ENCODE measurements at regions of chr10 and their contacts with region 1.

Region 1: DNA sequence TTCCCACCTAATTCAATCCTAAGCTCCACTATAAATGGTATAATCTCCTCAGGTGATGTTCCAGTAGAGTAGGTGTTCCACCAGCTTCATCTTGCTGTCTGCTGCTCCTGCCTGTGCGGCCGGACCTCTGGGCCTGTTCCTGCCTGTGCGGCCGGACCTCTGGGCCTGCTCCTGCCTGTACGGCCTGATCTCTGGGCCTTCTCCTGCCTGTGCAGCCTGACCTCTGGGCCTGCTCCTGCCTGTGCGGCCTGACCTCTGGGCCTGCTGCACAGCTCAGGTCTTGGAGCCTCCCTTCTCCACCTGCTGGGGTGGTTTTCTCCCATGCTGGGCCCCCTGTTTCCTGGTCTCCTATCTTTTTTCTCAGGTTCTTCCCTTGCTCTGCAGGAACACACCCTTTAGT is 117.8 kb downstream of the USP6NL start:
- DNase-seq: no peak
- H3K4me3 ChIP-seq: no peak overlapping the region
- H3K27ac ChIP-seq: no peak overlapping the region
- H3K4me1 ChIP-seq: peaks cover 0 to 3% (median 0%) of the 10 kb centered on the region in 4 experiments; a peak in 1 of 7 replicates
- H3K27me3 ChIP-seq: no peaks in the 10 kb centered on the region
- CTCF ChIP-seq: no peak
- EP300 ChIP-seq: no peak
- POLR2A ChIP-seq: no peak
- RAD21 ChIP-seq: no peak

Region 2: GRCh38 chr10:11505639-11506038 is 12.0 kb after region 1 on chr10:
- CTCF ChIA-PET with region 1: interaction called, 20 read pairs
- POLR2A ChIA-PET with region 1: no interaction called
- DNase-seq: no peak
- H3K4me3 ChIP-seq: no peak overlapping the region
- H3K27ac ChIP-seq: no peak overlapping the region
- H3K4me1 ChIP-seq: peaks cover 0 to 4% (median 2%) of the 10 kb centered on the region in 4 experiments; a peak in 4 of 7 replicates
- H3K27me3 ChIP-seq: no peaks in the 10 kb centered on the region
- CTCF ChIP-seq: no peak
- EP300 ChIP-seq: no peak
- POLR2A ChIP-seq: no peak
- RAD21 ChIP-seq: no peak

Measured in H1 (cell line).